Heart right ventricle (tissue), 16 donors: ENCODE measurements at regions of chr4 and their contacts with region 1.

Region 1: GRCh38 chr4:55363691-55364351 is 17.8 kb downstream of the SRD5A3 start:
- DNase-seq: no peak
- ATAC-seq: no peak
- H3K4me3 ChIP-seq: no peak overlapping the region
- H3K27ac ChIP-seq: peak overlapping the region in 2 of 10 donors; percentile 7 to 66
- H3K4me1 ChIP-seq: peaks cover 1 to 24% (median 9%) of the 10 kb centered on the region in 9 donors
- H3K27me3 ChIP-seq: no peaks in the 10 kb centered on the region
- CTCF ChIP-seq: no peak

Region 2: DNA sequence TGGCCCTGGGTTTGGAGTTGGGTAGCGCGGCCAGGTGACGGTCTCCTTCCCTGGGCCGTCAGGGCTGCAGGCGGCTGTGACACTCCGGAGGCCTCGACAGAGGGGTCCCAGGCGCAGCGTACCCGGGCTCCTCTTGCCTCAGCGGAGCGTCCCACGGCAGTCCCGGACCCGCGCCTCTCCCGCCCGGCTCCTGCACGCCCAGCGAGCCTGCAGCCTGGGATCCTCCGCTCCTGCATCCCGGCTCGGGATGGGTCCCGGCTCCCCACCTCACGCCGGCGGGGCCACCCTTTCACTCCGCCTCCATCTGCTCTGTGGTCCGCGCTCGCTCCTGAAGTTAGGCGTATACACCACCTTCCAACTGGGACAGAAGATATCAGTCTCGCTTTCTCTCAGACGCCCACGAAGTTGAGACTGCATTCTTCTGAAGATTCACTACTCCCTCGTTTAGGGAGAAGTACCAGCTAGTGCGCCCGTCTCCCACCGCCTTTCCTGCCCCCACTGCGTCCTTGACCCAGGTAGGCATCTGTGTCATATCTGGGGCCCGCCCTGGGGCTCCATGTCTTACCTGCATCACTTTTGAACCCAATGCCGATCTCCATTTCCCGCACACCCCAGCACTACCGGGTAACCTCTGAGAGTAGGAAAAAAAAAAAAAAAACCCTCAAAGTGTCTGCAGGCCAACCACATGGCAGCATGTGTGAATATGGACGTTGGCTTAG is 206.1 kb before region 1 on chr4:
- intact Hi-C with region 1: no loop called
- DNase-seq: no peak
- ATAC-seq: peak in 1 of 8 donors; percentile 49
- H3K4me3 ChIP-seq: peak overlapping the region in 7 of 10 donors; percentile 13 to 44 (median 33)
- H3K27ac ChIP-seq: no peak overlapping the region
- H3K4me1 ChIP-seq: peaks cover 0 to 10% (median 5%) of the 10 kb centered on the region in 9 donors
- H3K27me3 ChIP-seq: peaks cover 0 to 39% (median 15%) of the 10 kb centered on the region in 7 donors
- CTCF ChIP-seq: no peak

Region 3: GRCh38 chr4:55395529-55396307 is 31.9 kb after region 1 on chr4 and contains the start of gene TMEM165:
- intact Hi-C with region 1: loop called in 1 of 10 experiments (anchors 5 kb)
- DNase-seq: peak; percentile 91
- ATAC-seq: peak; percentile 96 to 99 (median 97)
- H3K4me3 ChIP-seq: peak within 1 kb of the TSS; percentile 62 to 99 (median 90)
- H3K27ac ChIP-seq: peak within 1 kb of the TSS; percentile 91 to 100 (median 98)
- H3K4me1 ChIP-seq: peaks cover 0 to 40% (median 33%) of the 10 kb centered on the region in 9 donors
- H3K27me3 ChIP-seq: no peaks in the 10 kb centered on the region
- CTCF ChIP-seq: no peak
- total RNA-seq, gene TMEM165: 30.3 to 86.3 (median 34.6) TPM